ENCODE measurements at regions of chr7 and their contacts with region 1.

Region 1: GRCh38 chr7:109493892-109494291 is 924.2 kb downstream of the DNAJB9 start:
- DNase-seq: no peak
- H3K4me3 ChIP-seq: no peak overlapping the region
- H3K4me3 Mint-ChIP-seq: no peak overlapping the region
- H3K27ac Mint-ChIP-seq: no peak overlapping the region
- H3K4me1 ChIP-seq: no peaks in the 10 kb centered on the region
- H3K4me1 Mint-ChIP-seq: no peaks in the 10 kb centered on the region
- H3K27me3 ChIP-seq: no peaks in the 10 kb centered on the region
- H3K27me3 Mint-ChIP-seq: no peaks in the 10 kb centered on the region
- CTCF ChIP-seq: no peak

Region 2: GRCh38 chr7:109639561-109639960 is 145.7 kb after region 1 on chr7:
- CTCF ChIA-PET with region 1: no interaction called
- POLR2A ChIA-PET with region 1: no interaction called
- intact Hi-C with region 1: loop called (anchors 2 kb)
- DNase-seq: no peak
- H3K4me3 ChIP-seq: no peak overlapping the region
- H3K4me3 Mint-ChIP-seq: no peak overlapping the region
- H3K27ac Mint-ChIP-seq: no peak overlapping the region
- H3K4me1 ChIP-seq: no peaks in the 10 kb centered on the region
- H3K4me1 Mint-ChIP-seq: no peaks in the 10 kb centered on the region
- H3K27me3 ChIP-seq: no peaks in the 10 kb centered on the region
- H3K27me3 Mint-ChIP-seq: no peaks in the 10 kb centered on the region
- CTCF ChIP-seq: no peak